Activated CD4-positive, alpha-beta memory T cell treated with anti-CD3 and anti-CD28 coated beads, Interleukin-2, amount 10 ng/mL, durations not matched to agents 7 days and 5 days (primary cell): ENCODE measurements at regions of chr20 and their contacts with region 1.

Region 1: DNA sequence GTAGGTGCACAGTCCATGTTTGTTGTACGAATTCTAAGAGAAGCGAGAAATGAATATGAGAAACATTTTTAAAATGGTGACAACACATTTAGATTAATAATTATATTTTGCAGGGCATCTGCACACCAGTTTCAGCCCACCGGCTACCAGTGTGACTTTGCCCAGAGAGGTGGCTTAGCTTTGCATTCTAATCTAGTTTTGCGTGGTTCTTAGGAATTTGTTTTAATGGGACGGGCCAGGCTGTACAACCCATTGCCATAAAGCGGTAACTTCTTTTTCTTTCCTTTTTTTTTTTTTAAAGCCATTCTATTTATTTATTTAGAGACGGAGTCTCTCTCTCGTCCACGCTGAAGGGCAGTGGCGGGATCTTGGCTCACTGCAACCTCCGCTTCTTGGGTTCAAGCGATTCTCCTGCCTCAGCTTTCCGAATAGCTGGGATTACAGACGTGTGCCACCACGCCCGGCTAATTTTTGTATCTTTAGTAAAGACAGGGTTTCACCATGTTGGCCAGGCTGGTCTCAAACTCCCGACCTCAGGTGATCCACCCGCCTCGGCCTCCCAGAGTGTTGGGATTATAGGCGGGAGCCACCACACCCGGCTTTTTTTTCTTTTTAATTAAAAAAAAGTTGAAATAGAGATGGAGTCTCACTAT is 829 bp downstream of the MANBAL start:
- DNase-seq: no peak
- H3K4me3 Mint-ChIP-seq: peak overlapping the region; percentile 88
- H3K27ac Mint-ChIP-seq: peak overlapping the region; percentile 52
- H3K4me1 Mint-ChIP-seq: peaks cover 42% of the 10 kb centered on the region
- H3K27me3 Mint-ChIP-seq: peaks cover 2% of the 10 kb centered on the region

Region 2: DNA sequence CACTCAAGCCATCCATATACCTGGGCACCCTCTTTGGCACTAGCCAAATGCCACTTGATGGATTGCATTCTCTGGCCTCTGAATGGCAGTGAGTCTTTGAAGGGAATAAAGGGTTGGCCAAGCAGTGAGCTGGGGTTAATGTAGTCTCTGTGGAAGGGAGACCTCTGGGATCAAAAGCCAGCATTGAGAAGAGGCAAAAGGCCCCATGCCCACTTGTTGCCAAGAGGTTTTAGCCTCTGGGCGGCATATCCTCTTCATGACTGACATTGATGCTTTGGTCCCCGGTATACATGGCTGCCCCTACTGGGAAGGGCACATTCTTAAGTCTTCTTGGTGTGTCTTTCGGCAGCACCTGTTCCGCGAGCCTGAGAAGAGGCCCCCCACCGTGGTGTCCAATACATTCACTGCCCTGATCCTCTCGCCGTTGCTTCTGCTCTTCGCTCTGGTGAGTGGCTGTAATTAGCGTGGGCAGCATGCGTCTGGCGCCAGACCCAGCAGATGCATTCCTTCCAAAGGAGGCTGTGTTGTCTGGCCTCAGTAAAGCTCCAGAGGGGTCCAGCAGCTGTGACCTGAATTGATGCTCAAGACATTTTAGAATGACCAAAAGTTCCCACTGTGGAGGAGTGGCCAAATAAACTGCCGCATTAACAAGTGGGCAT is 58.2 kb before region 1 on chr20:
- CTCF ChIA-PET with region 1: no interaction called
- POLR2A ChIA-PET with region 1: no interaction called
- DNase-seq: no peak
- H3K4me3 Mint-ChIP-seq: no peak overlapping the region
- H3K27ac Mint-ChIP-seq: no peak overlapping the region
- H3K4me1 Mint-ChIP-seq: no peaks in the 10 kb centered on the region
- H3K27me3 Mint-ChIP-seq: no peaks in the 10 kb centered on the region

Region 3: DNA sequence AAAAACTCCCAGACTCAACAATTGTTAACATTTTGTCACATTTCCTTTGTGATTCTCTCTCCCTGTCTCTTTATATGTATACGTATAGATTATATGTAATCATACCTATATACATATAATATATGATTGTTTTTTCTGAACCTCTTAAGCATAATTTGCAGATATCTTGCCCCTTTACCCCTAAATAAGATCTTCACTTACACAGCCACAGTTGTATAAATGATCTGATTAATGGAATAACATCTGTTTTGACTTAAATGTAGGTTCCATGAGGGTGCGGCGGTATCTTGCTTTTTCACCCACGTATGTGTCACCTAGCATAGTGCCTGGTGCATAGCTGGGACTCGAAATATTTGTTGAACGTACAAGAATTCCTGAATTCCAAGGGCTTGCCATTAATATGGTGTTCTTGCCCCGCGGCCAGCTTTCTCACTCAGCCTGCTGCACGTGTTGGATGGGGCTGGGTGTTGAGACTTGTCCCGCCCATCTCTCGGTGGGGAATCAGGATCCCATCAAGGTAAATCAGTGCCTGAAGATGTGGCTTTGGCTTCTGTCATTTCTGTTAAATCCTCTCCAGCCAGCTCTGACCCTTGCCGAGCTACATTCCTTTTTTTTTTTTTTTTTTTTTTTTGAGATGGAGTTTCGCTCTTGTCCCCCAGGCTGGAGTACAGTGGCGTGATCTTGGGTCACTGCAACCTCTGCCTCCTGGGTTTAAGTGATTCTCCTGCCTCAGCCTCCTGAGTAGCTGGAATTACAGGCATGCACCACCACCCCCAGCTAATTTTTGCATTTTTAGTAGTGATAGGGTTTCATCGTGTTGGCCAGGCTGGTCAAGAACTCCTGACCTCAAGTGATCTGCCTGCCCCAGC is 11.1 kb before region 1 on chr20:
- CTCF ChIA-PET with region 1: no interaction called
- POLR2A ChIA-PET with region 1: interaction called, 11 read pairs
- DNase-seq: no peak
- H3K4me3 Mint-ChIP-seq: no peak overlapping the region
- H3K27ac Mint-ChIP-seq: no peak overlapping the region
- H3K4me1 Mint-ChIP-seq: peaks cover 4% of the 10 kb centered on the region
- H3K27me3 Mint-ChIP-seq: peaks cover 8% of the 10 kb centered on the region

Region 4: DNA sequence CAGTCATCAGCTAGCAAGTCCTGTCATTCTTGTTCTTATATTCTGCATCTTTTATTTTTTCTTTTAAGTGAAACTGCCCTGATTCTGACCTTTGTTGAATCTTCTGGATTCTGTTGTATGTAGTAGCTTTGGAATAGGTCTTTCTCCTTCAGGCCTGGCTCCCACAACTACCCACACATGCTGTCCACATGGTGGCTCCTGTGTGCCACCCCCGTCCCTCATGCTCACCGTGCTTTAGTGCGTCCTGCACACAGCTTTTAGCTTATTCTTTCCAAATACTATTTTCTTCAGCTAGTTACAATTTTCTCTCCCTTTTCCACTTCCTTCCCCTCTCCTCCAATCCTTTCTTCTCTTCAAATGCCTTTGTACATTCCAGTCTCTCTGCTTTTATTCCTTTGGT is 465.4 kb after region 1 on chr20:
- CTCF ChIA-PET with region 1: no interaction called
- POLR2A ChIA-PET with region 1: no interaction called
- DNase-seq: no peak
- H3K4me3 Mint-ChIP-seq: no peak overlapping the region
- H3K27ac Mint-ChIP-seq: no peak overlapping the region
- H3K4me1 Mint-ChIP-seq: peaks cover 7% of the 10 kb centered on the region
- H3K27me3 Mint-ChIP-seq: no peaks in the 10 kb centered on the region